ENCODE measurements at regions of chr7 and their contacts with region 1.

Region 1: DNA sequence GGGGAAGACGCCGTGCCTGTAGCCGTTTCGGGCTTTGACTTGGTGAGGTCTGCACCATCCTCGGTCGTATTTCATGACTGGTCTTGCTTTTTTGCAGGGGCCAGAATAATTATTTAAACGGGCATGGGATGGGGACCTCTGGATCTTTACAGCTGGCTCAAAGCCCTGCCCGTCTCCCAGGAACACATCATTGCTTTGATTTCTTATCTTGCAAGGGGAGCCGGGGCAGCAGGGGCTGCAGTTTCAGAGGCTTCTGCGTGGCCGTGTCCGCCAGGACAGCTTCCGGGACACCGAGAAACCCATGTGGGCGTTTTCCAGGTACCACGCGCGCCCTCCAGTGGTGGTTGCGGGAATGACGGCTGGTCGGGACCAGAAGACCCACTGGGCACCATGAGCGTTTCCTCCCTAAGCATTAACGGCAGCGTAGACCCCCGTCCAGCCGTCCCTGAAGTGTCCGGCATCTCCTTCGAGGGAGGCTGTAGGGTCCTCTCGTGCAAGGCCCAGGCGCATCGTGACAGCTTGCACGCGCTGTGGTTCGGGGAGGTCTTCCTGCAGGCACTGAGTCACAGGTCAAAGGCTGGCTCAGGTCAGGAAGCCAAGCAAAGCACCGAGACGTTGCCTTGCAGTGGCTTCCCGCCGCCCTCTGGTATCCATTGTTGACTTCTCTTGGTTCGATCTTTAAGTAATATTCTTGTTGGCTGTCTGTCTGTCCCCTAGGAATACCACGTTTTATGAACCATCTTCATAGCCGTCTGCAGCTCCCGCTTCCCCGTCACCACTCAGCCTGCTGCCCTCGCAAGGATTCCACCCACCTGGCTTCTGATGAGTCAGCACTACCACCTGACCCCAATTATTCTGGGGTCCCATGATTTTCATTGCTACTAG is 16.2 kb upstream of the ZFAND2A start:
- DNase-seq: peak; percentile 77 to 92 (median 86)
- H3K4me3 ChIP-seq: no peak overlapping the region
- H3K27ac ChIP-seq: no peak overlapping the region
- H3K4me1 ChIP-seq: peaks cover 2% of the 10 kb centered on the region
- H3K27me3 ChIP-seq: no peaks in the 10 kb centered on the region
- CTCF ChIP-seq: peak; percentile 64 to 82 (median 80)
- EP300 ChIP-seq: no peak
- POLR2A ChIP-seq: no peak

Region 2: GRCh38 chr7:992709-993607 is 183.3 kb before region 1 on chr7:
- intact Hi-C with region 1: loop called in 2 of 4 experiments (anchors 5 to 10 kb)
- DNase-seq: peak; percentile 97 to 99 (median 98)
- H3K4me3 ChIP-seq: no peak overlapping the region
- H3K27ac ChIP-seq: no peak overlapping the region
- H3K4me1 ChIP-seq: peaks cover 14% of the 10 kb centered on the region
- H3K27me3 ChIP-seq: no peaks in the 10 kb centered on the region
- CTCF ChIP-seq: peak; percentile 99 to 100 (median 100)
- EP300 ChIP-seq: no peak
- POLR2A ChIP-seq: peak; percentile 35

Region 3: DNA sequence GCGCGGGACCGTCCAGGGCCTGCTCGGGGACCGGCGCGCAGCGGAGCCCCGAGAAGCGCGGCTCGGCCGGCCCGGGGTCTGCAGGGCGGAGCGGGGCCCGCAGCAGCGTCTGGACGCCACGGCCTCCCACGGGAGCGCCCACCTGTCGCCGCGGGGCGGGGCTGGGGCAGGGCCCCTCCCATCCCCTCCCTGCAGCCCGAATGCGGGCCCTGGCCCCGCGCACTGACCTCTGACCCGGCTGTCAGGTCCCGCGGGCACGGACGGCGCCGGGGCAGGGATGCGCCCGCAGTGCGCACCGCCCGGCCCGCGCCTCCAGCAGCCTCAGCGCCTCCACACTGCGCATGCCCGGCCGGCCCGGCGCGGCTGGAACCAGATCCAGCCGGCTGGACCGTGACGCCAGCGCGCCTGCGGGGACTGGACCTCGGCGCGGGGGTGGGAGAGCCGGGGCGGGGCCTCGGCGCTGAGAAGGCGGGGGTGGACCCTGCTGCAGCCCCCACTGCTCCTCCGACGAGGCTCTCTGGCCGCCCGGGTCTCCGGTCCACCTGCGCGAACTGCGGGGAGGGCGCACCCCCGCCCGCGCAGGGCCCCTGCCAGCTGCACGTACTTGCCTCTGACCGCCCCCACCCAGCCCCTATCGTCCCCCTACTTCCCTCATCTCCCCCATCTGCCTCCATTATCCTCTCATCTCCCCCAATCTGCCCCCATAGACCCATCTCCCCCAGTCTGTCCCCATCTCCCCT is 148.0 kb before region 1 on chr7:
- intact Hi-C with region 1: no loop called
- DNase-seq: peak; percentile 94 to 97 (median 96)
- H3K4me3 ChIP-seq: peak overlapping the region; percentile 69
- H3K27ac ChIP-seq: peak overlapping the region; percentile 96 to 99
- H3K4me1 ChIP-seq: peaks cover 1% of the 10 kb centered on the region
- H3K27me3 ChIP-seq: no peaks in the 10 kb centered on the region
- CTCF ChIP-seq: no peak
- EP300 ChIP-seq: no peak
- POLR2A ChIP-seq: peak; percentile 88

Region 4: DNA sequence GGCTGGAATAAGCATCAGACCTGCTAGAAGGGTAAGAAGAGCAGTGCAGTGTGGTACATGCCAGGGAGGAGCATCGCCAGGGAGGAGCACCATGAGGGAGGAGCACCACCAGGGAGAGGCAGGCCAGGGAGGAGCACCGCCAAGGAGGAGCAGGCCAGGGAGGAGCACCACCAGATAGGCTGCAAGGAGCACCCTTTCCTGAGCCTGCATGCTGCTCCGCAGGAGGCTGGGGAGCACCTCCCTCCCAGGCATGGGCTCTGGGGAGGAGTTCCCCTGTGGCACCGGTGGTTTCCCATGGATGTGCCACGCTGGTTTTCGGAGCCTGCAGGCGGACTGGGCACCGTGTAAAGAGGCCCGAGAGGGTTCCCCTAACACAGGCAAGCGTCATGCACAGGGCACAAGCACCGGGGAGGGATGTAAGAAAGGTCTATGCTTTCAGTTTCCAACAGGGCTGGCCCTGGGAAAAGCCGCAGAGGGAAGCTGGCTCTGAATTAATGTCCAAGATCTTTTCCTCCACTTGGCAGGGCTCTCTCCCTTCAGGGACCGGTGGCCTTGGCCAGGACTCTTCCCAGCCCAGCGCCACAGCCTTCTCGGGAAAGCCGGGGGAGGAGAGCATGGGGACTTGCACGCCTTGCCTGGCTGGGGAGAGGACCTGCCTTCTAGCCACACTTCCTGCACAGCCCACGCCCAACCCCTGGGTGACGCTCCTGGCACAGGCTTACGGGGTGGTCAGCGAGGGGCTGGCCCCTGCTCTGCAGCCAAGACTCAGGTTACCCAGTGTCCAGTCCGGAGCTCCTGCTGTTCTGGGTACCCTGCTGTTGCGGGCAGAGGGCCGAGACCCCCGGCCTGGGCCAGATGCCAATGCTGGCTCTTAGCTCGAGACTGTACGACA is 99.8 kb before region 1 on chr7:
- intact Hi-C with region 1: loop called in 3 of 4 experiments (anchors 5 to 10 kb)
- DNase-seq: peak in 2 of 5 donors; percentile 61 to 64
- H3K4me3 ChIP-seq: no peak overlapping the region
- H3K27ac ChIP-seq: peak overlapping the region in 1 of 2 donors; percentile 34
- H3K4me1 ChIP-seq: peaks cover 8% of the 10 kb centered on the region
- H3K27me3 ChIP-seq: no peaks in the 10 kb centered on the region
- CTCF ChIP-seq: no peak
- EP300 ChIP-seq: no peak
- POLR2A ChIP-seq: no peak

Region 5: GRCh38 chr7:1086588-1087464 is 89.4 kb before region 1 on chr7:
- intact Hi-C with region 1: loop called (anchors 5 to 10 kb)
- DNase-seq: peak; percentile 62 to 83 (median 79)
- H3K4me3 ChIP-seq: peak overlapping the region; percentile 40
- H3K27ac ChIP-seq: no peak overlapping the region
- H3K4me1 ChIP-seq: peaks cover 9% of the 10 kb centered on the region
- H3K27me3 ChIP-seq: no peaks in the 10 kb centered on the region
- CTCF ChIP-seq: peak; percentile 81 to 95 (median 82)
- EP300 ChIP-seq: no peak
- POLR2A ChIP-seq: no peak

Region 6: GRCh38 chr7:1131528-1132265 is 44.5 kb before region 1 on chr7:
- intact Hi-C with region 1: loop called in 1 of 4 experiments (anchors 2 kb)
- DNase-seq: no peak
- H3K4me3 ChIP-seq: no peak overlapping the region
- H3K27ac ChIP-seq: no peak overlapping the region
- H3K4me1 ChIP-seq: peaks cover 6% of the 10 kb centered on the region
- H3K27me3 ChIP-seq: no peaks in the 10 kb centered on the region
- CTCF ChIP-seq: no peak
- EP300 ChIP-seq: no peak
- POLR2A ChIP-seq: no peak

Region 7: GRCh38 chr7:1144269-1144771 is 31.9 kb before region 1 on chr7:
- intact Hi-C with region 1: no loop called
- DNase-seq: peak in 1 of 5 donors; percentile 24
- H3K4me3 ChIP-seq: no peak overlapping the region
- H3K27ac ChIP-seq: no peak overlapping the region
- H3K4me1 ChIP-seq: no peaks in the 10 kb centered on the region
- H3K27me3 ChIP-seq: no peaks in the 10 kb centered on the region
- CTCF ChIP-seq: no peak
- EP300 ChIP-seq: no peak
- POLR2A ChIP-seq: no peak

Region 8: GRCh38 chr7:1512781-1513656 is 336.8 kb after region 1 on chr7:
- intact Hi-C with region 1: no loop called
- DNase-seq: no peak
- H3K4me3 ChIP-seq: no peak overlapping the region
- H3K27ac ChIP-seq: no peak overlapping the region
- H3K4me1 ChIP-seq: no peaks in the 10 kb centered on the region
- H3K27me3 ChIP-seq: no peaks in the 10 kb centered on the region
- CTCF ChIP-seq: no peak
- EP300 ChIP-seq: no peak
- POLR2A ChIP-seq: no peak

Measured in ovary (tissue), 10 donors.